K562 (cell line): ENCODE measurements at regions of chr7 and their contacts with region 1.

Region 1: DNA sequence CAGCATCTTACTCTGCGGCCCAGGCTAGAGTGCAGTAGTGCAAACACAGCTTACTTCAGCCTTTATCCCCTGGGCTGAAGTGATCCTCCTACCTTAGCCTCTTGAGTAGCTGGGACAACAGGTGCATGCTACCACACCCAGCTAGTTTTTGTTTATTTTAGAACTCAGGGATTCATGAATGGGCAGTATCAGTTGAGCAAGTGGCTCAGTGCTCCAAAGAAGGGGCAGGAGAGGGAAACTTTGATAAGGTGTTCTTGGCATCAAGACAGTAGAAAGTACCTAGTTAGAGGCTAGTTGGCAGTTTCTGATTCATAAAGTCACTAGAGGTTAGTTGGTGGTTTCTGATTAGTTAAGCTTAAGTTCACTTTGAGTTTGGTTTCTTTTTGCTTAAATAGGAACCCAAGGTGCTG is 18.4 kb downstream of the TRIM24 start:
- DNase-seq: no peak
- ATAC-seq: peak; percentile 43
- H3K4me3 ChIP-seq: no peak overlapping the region
- H3K27ac ChIP-seq: no peak overlapping the region; the same call in 2 of the 3 replicates
- H3K4me1 ChIP-seq: peaks cover 3 to 12% of the 10 kb centered on the region in 2 experiments; a peak in 3 of 5 replicates
- H3K27me3 ChIP-seq: no peaks in the 10 kb centered on the region
- CTCF ChIP-seq: no peak
- EP300 ChIP-seq: no peak
- POLR2A ChIP-seq: no peak
- RAD21 ChIP-seq: no peak

Region 2: GRCh38 chr7:138459413-138460175 is 18.9 kb before region 1 on chr7:
- CTCF ChIA-PET with region 1: no interaction called
- POLR2A ChIA-PET with region 1: interaction called, 12 read pairs
- in situ Hi-C with region 1: no loop called
- intact Hi-C with region 1: no loop called
- DNase-seq: peak; percentile 99
- ATAC-seq: peak; percentile 90
- H3K4me3 ChIP-seq: peak overlapping the region; percentile 46
- H3K27ac ChIP-seq: peak overlapping the region; percentile 76
- H3K4me1 ChIP-seq: peaks cover 0 to 20% of the 10 kb centered on the region in 2 experiments; a peak in 3 of 5 replicates
- H3K27me3 ChIP-seq: no peaks in the 10 kb centered on the region
- CTCF ChIP-seq: peak; percentile 10 to 35 (median 13); a peak in 2 of 6 replicates
- EP300 ChIP-seq: 0 out of 2 replicates have a peak, but pooled peaks have one; percentile 23
- POLR2A ChIP-seq: no peak; the same call in 1 of the 2 replicates
- RAD21 ChIP-seq: no peak